ENCODE measurements at regions of chr11 and their contacts with region 1.

Region 1: GRCh38 chr11:3169255-3170045 is 4.3 kb upstream of the OSBPL5 start:
- DNase-seq: peak; percentile 55
- H3K4me3 ChIP-seq: peak overlapping the region; percentile 64
- H3K27ac ChIP-seq: peak overlapping the region; percentile 73
- H3K4me1 ChIP-seq: peaks cover 38% of the 10 kb centered on the region
- H3K27me3 ChIP-seq: no peaks in the 10 kb centered on the region
- CTCF ChIP-seq: peak; percentile 19

Region 2: GRCh38 chr11:3109921-3110706 is 59.3 kb before region 1 on chr11:
- intact Hi-C with region 1: loop called (anchors 10 kb)
- DNase-seq: no peak
- H3K4me3 ChIP-seq: no peak overlapping the region
- H3K27ac ChIP-seq: no peak overlapping the region
- H3K4me1 ChIP-seq: no peaks in the 10 kb centered on the region
- H3K27me3 ChIP-seq: no peaks in the 10 kb centered on the region
- CTCF ChIP-seq: peak; percentile 79

Measured in left ventricle myocardium inferior (tissue), 1 donor.